Activated T-helper 2 cell treated with anti-CD3 and anti-CD28 coated beads, Interferon-gamma antibody, Interleukin-2, Interleukin-4, amounts not matched to agents 10 μg/mL and 5 μg/mL and 100 μg/mL, durations not matched to agents 14 hours and 24 hours and 36 hours (primary cell): ENCODE measurements at regions of chr13 and their contacts with region 1.

Region 1: DNA sequence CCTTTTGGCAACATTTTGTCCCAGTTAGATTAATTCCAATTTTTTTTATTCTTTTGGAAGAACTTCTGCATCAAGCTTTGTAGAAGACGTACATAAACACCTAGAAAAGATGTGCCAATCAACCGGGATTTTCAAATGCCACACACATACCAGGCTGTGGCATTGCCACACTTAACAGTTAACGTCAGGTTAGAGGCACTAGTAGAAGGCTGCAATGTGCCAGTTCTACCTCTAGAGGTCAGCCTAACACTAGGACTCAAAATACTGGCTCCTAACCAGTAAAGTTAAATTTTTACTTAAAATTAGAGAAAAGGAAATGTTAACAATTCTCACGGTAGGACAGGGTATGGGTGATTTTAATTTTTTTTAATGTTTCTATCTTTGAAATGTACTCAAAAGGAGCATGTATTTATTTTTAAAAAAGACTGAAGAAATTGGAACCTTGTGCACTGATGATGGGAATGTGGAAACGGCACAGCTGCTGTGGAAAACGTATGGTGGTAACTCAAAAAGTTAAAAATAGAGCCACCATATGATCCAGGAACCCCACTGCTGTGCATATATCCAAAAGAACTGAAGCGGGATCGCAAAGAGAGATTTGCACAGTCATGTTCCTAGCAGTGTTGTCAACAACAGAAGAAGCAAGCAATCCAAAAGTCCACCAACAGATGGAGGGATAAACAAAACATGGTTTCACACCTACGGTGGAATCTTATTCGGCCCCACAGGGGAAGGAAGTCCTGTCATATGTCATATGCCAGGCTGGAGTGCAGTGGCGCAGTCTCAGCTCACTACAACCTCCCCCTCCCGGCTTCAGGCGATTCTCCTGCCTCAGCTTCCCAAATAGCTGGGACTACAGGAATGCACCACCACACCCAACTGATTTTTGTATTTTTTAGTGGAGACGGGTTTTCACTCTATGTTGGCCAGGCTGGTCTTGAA is 30.3 kb downstream of the CRYL1 start:
- DNase-seq: peak; percentile 32
- H3K4me3 Mint-ChIP-seq: no peak overlapping the region
- H3K27ac Mint-ChIP-seq: no peak overlapping the region
- H3K4me1 Mint-ChIP-seq: no peaks in the 10 kb centered on the region
- H3K27me3 Mint-ChIP-seq: no peaks in the 10 kb centered on the region

Region 2: GRCh38 chr13:20828539-20829364 is 333.4 kb after region 1 on chr13:
- intact Hi-C with region 1: loop called (anchors 1 kb)
- DNase-seq: peak; percentile 15
- H3K4me3 Mint-ChIP-seq: no peak overlapping the region
- H3K27ac Mint-ChIP-seq: no peak overlapping the region
- H3K4me1 Mint-ChIP-seq: peaks cover 6% of the 10 kb centered on the region
- H3K27me3 Mint-ChIP-seq: no peaks in the 10 kb centered on the region

Region 3: DNA sequence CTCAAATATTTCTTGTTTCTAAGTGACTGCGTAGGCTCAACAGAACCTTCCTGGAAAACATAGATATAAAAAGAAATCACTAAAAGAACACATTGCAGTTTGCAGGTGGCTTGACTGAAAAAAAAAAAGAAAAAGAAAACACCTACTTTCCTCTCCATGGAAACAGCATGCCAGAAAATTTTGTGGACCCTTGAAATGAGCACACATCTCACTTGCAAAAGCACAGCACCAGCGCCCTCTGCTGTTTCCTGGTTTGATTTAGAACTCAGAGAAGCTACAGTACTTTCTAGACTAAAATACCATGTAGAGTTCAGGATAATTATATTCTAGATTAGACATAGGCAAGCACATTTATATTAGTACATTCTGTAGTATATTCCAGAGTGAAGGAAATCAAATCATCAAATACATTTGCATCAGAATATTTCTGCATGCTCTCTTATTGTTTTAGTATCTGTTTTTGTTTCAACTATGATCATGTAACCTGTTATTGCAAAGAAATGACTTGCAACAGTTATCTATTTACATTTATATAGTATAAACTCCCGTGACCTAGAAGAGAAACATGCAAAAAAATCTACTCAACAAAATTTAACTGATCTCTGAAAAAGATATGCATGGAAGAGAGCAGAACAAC is 429.5 kb after region 1 on chr13:
- intact Hi-C with region 1: loop called (anchors 1 kb)
- DNase-seq: peak; percentile 41
- H3K4me3 Mint-ChIP-seq: no peak overlapping the region
- H3K27ac Mint-ChIP-seq: no peak overlapping the region
- H3K4me1 Mint-ChIP-seq: no peaks in the 10 kb centered on the region
- H3K27me3 Mint-ChIP-seq: no peaks in the 10 kb centered on the region